A673 (cell line): ENCODE measurements at regions of chr15 and their contacts with region 1.

Region 1: DNA sequence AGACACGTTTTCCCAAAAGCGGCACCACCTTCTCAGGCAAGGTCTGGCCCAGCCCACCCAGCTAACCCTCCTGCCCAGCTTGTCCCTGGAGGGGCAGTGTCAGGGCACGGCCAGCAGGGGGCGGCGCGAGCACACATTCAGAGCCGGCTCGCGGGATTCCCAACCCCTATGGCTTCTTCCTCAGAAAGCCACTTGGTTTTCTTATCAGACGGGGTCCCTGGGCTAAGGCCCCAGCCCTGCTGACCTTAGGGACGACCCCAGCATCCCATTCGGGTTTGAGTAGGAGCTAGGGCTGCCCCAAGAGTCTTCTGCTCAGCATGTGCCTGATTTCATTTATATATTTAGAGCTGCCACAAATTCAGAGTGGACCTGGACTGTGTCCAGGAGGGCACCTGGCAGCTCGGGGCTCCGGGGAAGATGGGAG is 14.5 kb downstream of the RLBP1 start:
- DNase-seq: peak; percentile 85
- H3K4me3 ChIP-seq: no peak overlapping the region
- H3K27ac ChIP-seq: no peak overlapping the region
- H3K4me1 ChIP-seq: no peaks in the 10 kb centered on the region
- H3K27me3 ChIP-seq: no peaks in the 10 kb centered on the region
- CTCF ChIP-seq: peak; percentile 99

Region 2: DNA sequence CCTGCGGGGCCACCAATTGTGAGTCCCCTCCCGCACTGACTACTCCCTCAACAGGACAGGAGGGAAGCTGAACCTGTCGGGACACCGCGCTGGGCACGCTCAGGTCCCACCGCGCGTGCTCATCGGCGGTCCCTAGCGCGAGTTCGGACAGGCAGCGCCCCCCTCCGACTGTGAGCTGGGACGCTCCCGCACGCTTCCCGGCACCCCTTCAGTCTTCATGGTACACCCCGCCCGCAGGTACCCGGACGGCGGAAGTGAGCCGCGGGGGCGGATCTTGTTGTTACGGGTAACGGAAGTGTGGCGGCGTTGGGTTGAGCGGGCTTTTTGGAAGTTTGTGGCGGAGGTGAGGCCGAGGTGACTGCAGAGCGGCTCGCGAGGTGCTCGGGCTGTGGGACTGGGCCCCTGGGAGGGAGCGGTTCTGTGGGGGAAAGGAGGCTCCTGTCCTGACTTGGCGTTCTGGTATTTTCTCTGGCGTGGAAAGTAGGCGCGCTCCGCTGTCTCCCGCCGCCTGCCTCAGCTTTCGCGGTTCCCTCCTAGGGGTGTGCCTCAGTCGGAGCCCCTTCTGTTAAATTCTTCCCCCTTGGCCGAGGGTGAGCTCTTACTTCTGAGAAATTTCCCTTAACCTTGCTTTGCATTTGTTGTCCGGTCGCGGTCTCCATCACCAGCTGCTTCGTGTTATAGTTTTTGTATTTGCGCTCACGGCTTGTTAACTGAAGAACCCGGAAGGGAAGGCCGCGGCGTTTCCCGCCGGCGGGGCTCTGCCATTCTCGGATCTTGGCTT is 37.0 kb after region 1 on chr15 and contains the start of gene FANCI:
- CTCF ChIA-PET with region 1: interaction called, 7 read pairs
- POLR2A ChIA-PET with region 1: no interaction called
- intact Hi-C with region 1: loop called (anchors 2 kb)
- DNase-seq: peak; percentile 98
- H3K4me3 ChIP-seq: peak within 1 kb of the TSS; percentile 73
- H3K27ac ChIP-seq: peak within 1 kb of the TSS; percentile 79
- H3K4me1 ChIP-seq: peaks cover 13% of the 10 kb centered on the region
- H3K27me3 ChIP-seq: no peaks in the 10 kb centered on the region
- CTCF ChIP-seq: peak; percentile 77
- total RNA-seq, gene FANCI: 163 and 175 TPM in 2 replicates

Region 3: DNA sequence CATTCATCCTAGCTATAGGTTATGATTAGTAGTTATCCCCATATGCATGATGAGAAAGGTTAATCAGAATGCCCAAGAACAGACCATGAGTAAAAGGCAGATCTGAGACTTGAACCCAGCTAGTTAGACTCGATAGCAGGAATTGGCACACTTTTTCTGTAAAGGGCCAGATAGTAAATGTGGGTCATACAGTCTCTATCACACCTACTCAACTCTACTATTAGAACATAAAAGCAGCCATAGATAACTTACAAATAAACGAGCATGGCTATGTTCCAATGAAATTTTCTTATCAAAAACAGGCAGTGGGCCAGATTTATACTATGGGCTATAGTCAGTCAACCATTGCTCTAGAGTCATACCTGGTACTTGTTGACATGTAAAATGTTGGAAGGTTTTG is 103.1 kb after region 1 on chr15:
- CTCF ChIA-PET with region 1: interaction called, 3 read pairs
- POLR2A ChIA-PET with region 1: no interaction called
- intact Hi-C with region 1: loop called (anchors 5 kb)
- DNase-seq: no peak
- H3K4me3 ChIP-seq: no peak overlapping the region
- H3K27ac ChIP-seq: no peak overlapping the region
- H3K4me1 ChIP-seq: no peaks in the 10 kb centered on the region
- H3K27me3 ChIP-seq: no peaks in the 10 kb centered on the region
- CTCF ChIP-seq: no peak

Region 4: GRCh38 chr15:89329329-89330084 is 122.6 kb after region 1 on chr15:
- CTCF ChIA-PET with region 1: no interaction called
- POLR2A ChIA-PET with region 1: no interaction called
- intact Hi-C with region 1: no loop called
- DNase-seq: no peak
- H3K4me3 ChIP-seq: no peak overlapping the region
- H3K27ac ChIP-seq: no peak overlapping the region
- H3K4me1 ChIP-seq: peaks cover 24% of the 10 kb centered on the region
- H3K27me3 ChIP-seq: no peaks in the 10 kb centered on the region
- CTCF ChIP-seq: no peak